PC-3 (cell line): ENCODE measurements at regions of chr21 and their contacts with region 1.

Region 1: DNA sequence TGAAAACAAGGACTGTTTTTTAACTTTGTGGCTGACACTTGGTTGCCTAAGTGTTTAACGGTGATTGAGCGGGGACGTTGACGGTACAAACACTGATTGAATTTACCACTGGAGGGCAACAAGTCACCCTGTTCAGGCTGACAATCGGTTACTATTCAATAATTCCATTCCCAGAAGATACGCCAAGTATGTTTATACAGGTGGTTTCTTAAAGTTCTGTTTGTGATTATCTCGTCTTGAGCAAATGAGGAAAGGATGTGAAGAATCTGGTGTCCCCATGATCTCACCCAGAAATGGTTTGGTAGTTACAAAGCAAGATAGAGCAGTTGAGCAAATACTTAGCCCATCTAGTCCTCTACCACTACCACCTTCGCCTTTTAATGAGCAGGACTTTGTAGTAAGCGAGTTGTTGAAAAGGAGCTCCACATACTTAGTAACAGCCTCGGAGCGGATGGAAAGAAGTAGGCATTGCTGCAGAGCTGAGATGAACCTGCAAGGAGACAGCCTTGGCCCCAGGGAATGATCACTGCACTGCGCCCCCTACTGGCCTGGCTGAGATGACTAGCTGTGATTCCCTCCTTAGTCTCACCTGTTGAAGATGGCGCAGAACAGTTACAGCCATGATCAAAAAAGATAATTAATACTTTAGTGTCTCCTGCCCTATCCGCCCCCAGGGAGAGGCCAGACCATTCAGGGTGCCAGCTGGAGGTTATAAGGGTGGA is 36.3 kb downstream of the IFNAR1 start:
- DNase-seq: peak; percentile 84
- ATAC-seq: peak; percentile 87
- H3K4me3 ChIP-seq: peak overlapping the region; percentile 32
- H3K27ac ChIP-seq: peak overlapping the region; percentile 68
- H3K4me1 ChIP-seq: peaks cover 23% of the 10 kb centered on the region
- H3K27me3 ChIP-seq: no peaks in the 10 kb centered on the region
- CTCF ChIP-seq: peak; percentile 87

Region 2: GRCh38 chr21:33332143-33332542 is 28.9 kb before region 1 on chr21:
- CTCF ChIA-PET with region 1: interaction called, 11 read pairs
- POLR2A ChIA-PET with region 1: no interaction called
- intact Hi-C with region 1: no loop called
- DNase-seq: no peak
- ATAC-seq: no peak
- H3K4me3 ChIP-seq: no peak overlapping the region
- H3K27ac ChIP-seq: no peak overlapping the region
- H3K4me1 ChIP-seq: no peaks in the 10 kb centered on the region
- H3K27me3 ChIP-seq: no peaks in the 10 kb centered on the region
- CTCF ChIP-seq: no peak

Region 3: GRCh38 chr21:33374450-33375096 is 13.5 kb after region 1 on chr21:
- CTCF ChIA-PET with region 1: interaction called, 14 read pairs
- POLR2A ChIA-PET with region 1: no interaction called
- intact Hi-C with region 1: loop called (anchors 1 kb)
- DNase-seq: peak; percentile 90
- ATAC-seq: peak; percentile 87
- H3K4me3 ChIP-seq: peak overlapping the region; percentile 31; the same call in 1 of the 2 replicates
- H3K27ac ChIP-seq: peak overlapping the region; percentile 93
- H3K4me1 ChIP-seq: peaks cover 28% of the 10 kb centered on the region
- H3K27me3 ChIP-seq: no peaks in the 10 kb centered on the region
- CTCF ChIP-seq: peak; percentile 85

Region 4: GRCh38 chr21:33428669-33429068 is 67.6 kb after region 1 on chr21:
- CTCF ChIA-PET with region 1: interaction called, 4 read pairs
- POLR2A ChIA-PET with region 1: no interaction called
- intact Hi-C with region 1: loop called (anchors 2 kb)
- DNase-seq: peak; percentile 95
- ATAC-seq: peak; percentile 78
- H3K4me3 ChIP-seq: peak overlapping the region; percentile 9; the same call in 1 of the 2 replicates
- H3K27ac ChIP-seq: peak overlapping the region; percentile 99
- H3K4me1 ChIP-seq: peaks cover 33% of the 10 kb centered on the region
- H3K27me3 ChIP-seq: no peaks in the 10 kb centered on the region
- CTCF ChIP-seq: no peak